ENCODE measurements at regions of chr7 and their contacts with region 1.

Region 1: GRCh38 chr7:129292861-129293260 is 68.0 kb downstream of the AHCYL2 start:
- DNase-seq: no peak
- ATAC-seq: no peak
- H3K4me3 ChIP-seq: no peak overlapping the region
- H3K27ac ChIP-seq: no peak overlapping the region
- H3K4me1 ChIP-seq: no peaks in the 10 kb centered on the region
- H3K27me3 ChIP-seq: no peaks in the 10 kb centered on the region
- CTCF ChIP-seq: no peak
- POLR2A ChIP-seq: no peak
- RAD21 ChIP-seq: no peak

Region 2: GRCh38 chr7:129252128-129252527 is 40.7 kb before region 1 on chr7:
- CTCF ChIA-PET with region 1: interaction called, 8 read pairs
- POLR2A ChIA-PET with region 1: no interaction called
- dilution Hi-C with region 1: no loop called
- in situ Hi-C with region 1: no loop called
- intact Hi-C with region 1: loop called (anchors 5 kb)
- DNase-seq: no peak
- ATAC-seq: no peak
- H3K4me3 ChIP-seq: no peak overlapping the region
- H3K27ac ChIP-seq: no peak overlapping the region
- H3K4me1 ChIP-seq: peaks cover 3% of the 10 kb centered on the region; the same call in 1 of the 2 replicates
- H3K27me3 ChIP-seq: no peaks in the 10 kb centered on the region
- CTCF ChIP-seq: no peak
- POLR2A ChIP-seq: no peak
- RAD21 ChIP-seq: no peak

Region 3: DNA sequence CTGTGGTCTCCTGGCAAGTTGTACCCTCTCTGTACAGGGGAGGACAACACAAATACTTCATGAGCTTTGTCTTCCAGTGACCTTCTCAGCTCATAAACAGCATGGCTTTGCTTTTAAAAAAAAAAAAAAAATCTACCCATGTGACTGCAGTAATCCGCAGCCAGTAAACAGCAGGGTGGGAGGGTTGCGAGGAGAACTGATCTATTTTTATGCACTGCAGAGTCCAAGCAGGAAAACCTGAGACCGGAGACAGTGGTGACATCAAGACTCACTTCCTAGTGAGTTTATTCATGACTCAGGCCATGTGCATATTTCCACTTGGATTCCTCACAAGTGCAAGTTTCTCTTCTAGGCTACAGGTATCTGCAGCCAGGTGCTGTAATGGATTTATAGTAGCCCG is 446.6 kb after region 1 on chr7:
- CTCF ChIA-PET with region 1: no interaction called
- POLR2A ChIA-PET with region 1: no interaction called
- dilution Hi-C with region 1: no loop called
- in situ Hi-C with region 1: no loop called
- intact Hi-C with region 1: no loop called
- DNase-seq: peak; percentile 76
- ATAC-seq: peak; percentile 69
- H3K4me3 ChIP-seq: no peak overlapping the region
- H3K27ac ChIP-seq: no peak overlapping the region
- H3K4me1 ChIP-seq: peaks cover 1% of the 10 kb centered on the region; the same call in 1 of the 2 replicates
- H3K27me3 ChIP-seq: no peaks in the 10 kb centered on the region
- CTCF ChIP-seq: no peak
- POLR2A ChIP-seq: no peak
- RAD21 ChIP-seq: no peak

Measured in IMR-90 (cell line).